Transverse colon (tissue), 4 donors: ENCODE measurements at regions of chr12 and their contacts with region 1.

Region 1: GRCh38 chr12:121626087-121626852 is at the start of gene ORAI1:
- DNase-seq: peak; percentile 98
- H3K4me3 ChIP-seq: peak within 1 kb of the TSS; percentile 58 to 80 (median 71)
- H3K27ac ChIP-seq: peak within 1 kb of the TSS; percentile 94 to 99 (median 96)
- H3K4me1 ChIP-seq: peaks cover 6 to 48% (median 37%) of the 10 kb centered on the region in 4 donors
- H3K27me3 ChIP-seq: no peaks in the 10 kb centered on the region
- CTCF ChIP-seq: peak in 3 of 5 experiments; percentile 2 to 19 (median 12)
- EP300 ChIP-seq: no peak
- POLR2A ChIP-seq: peak; percentile 29
- total RNA-seq, gene ORAI1: 7.5 to 9.1 (median 8.2) TPM

Region 2: DNA sequence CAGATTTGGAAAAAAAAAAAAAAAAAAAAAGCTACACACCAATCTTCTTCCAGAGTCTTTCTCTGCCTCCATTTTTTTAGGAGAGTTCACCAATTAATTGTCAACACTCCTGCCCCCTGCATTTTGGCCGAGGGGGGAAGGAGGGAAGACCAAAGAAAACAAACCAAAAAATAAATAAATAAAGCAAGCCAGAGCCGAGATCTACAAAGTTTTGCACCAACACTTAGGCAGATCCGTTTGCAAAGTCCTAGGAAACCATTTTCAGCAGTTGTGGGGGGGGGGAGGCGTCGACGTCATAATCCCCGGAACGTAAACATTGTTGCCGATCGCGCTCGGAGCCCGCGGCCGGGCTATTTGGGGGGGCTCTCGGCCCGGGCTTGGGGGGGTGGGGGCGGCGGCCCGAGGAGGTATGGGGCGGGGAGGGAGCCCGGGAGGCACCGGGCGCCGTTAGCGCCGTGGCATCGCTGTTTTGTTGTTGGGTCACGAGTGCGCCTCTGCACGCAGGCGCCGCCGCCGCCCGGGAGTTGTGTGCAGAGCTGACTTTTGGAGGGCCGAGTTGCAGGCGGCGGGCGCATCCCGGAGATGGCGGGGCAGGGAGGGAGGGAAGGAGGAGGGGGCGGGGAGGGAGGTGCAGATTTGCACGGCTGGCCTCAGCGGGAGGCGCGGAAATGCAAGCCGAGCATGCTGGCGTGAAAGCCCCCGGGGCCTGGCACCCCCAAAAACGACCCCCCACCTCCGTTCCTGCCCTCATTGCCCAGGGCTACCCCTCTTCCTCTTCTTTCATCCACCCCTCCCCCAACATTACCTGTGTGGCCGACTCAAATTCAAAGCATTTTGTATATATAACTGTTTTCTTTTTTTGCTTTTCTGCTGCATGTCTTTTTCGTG is 46.0 kb before region 1 on chr12:
- in situ Hi-C with region 1: loop called in 1 of 4 experiments (anchors 10 kb)
- intact Hi-C with region 1: no loop called
- DNase-seq: peak; percentile 84
- H3K4me3 ChIP-seq: peak overlapping the region; percentile 59 to 80 (median 64)
- H3K27ac ChIP-seq: peak overlapping the region; percentile 88 to 90 (median 89)
- H3K4me1 ChIP-seq: peaks cover 18 to 64% (median 39%) of the 10 kb centered on the region in 4 donors
- H3K27me3 ChIP-seq: no peaks in the 10 kb centered on the region
- CTCF ChIP-seq: no peak
- EP300 ChIP-seq: no peak
- POLR2A ChIP-seq: no peak